Heart left ventricle (tissue), 16 donors: ENCODE measurements at regions of chr1 and their contacts with region 1.

Region 1: DNA sequence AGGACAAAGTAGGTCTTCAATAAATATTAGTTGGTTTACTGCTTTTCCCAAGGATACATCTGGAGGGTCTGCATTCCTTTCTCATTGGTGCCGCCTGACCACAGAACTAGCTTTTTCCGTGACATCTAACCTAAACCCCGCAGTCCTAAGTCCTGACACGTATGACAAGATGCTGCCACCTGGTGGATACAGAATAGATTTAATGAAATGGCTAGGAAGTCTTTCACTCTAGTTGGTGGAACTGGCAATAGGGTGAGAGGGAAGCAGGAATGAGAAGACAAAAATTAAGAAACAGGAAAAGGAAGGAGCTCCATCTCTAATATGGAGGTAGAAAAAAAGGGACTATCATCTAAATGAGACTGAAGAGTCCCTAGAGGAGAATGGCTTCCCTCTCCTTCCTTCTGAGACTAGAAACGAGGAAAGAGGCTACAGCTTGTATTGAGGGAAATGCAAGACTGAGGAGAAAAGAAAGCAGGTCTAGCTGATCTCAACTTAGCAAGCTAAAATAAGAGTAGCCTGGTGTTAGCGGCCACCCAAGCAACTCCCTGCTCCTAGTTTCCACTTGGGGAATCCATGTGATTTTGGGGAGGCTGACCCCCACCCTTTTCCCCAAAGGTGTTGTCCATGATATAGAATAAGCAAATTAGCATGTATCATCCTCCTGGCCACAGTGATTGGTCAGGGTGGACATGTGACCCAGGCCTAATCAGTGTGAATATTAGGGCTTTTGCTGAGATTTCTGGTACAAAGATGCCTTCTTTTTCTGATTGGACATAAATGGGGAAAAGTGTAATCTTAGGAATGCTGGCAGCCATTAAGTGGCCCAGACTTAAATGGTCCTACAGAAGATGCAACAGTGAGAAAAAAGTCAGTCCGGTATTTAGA is 5.9 kb downstream of the RFX5 start:
- DNase-seq: peak in 3 of 5 donors; percentile 33 to 61 (median 43)
- ATAC-seq: peak; percentile 85 to 91 (median 88)
- H3K4me3 ChIP-seq: no peak overlapping the region
- H3K27ac ChIP-seq: peak overlapping the region in 2 of 12 donors; percentile 30 to 54
- H3K4me1 ChIP-seq: peaks cover 0 to 24% (median 7%) of the 10 kb centered on the region in 12 donors
- H3K27me3 ChIP-seq: no peaks in the 10 kb centered on the region
- CTCF ChIP-seq: peak; percentile 61 to 81 (median 73)
- POLR2A ChIP-seq: no peak

Region 2: GRCh38 chr1:151146412-151147140 is 194.5 kb before region 1 on chr1 and contains the start of gene SEMA6C:
- intact Hi-C with region 1: no loop called
- DNase-seq: peak; percentile 97 to 98 (median 98)
- ATAC-seq: peak; percentile 93 to 95 (median 93)
- H3K4me3 ChIP-seq: peak within 1 kb of the TSS; percentile 66 to 97 (median 84)
- H3K27ac ChIP-seq: peak within 1 kb of the TSS; percentile 79 to 92 (median 87)
- H3K4me1 ChIP-seq: peaks cover 13 to 53% (median 39%) of the 10 kb centered on the region in 12 donors
- H3K27me3 ChIP-seq: peaks cover 0 to 5% (median 0%) of the 10 kb centered on the region in 9 donors
- CTCF ChIP-seq: no peak
- POLR2A ChIP-seq: peak; percentile 94 to 97
- total RNA-seq, gene SEMA6C: 36.4 to 97.1 (median 50.8) TPM

Region 3: DNA sequence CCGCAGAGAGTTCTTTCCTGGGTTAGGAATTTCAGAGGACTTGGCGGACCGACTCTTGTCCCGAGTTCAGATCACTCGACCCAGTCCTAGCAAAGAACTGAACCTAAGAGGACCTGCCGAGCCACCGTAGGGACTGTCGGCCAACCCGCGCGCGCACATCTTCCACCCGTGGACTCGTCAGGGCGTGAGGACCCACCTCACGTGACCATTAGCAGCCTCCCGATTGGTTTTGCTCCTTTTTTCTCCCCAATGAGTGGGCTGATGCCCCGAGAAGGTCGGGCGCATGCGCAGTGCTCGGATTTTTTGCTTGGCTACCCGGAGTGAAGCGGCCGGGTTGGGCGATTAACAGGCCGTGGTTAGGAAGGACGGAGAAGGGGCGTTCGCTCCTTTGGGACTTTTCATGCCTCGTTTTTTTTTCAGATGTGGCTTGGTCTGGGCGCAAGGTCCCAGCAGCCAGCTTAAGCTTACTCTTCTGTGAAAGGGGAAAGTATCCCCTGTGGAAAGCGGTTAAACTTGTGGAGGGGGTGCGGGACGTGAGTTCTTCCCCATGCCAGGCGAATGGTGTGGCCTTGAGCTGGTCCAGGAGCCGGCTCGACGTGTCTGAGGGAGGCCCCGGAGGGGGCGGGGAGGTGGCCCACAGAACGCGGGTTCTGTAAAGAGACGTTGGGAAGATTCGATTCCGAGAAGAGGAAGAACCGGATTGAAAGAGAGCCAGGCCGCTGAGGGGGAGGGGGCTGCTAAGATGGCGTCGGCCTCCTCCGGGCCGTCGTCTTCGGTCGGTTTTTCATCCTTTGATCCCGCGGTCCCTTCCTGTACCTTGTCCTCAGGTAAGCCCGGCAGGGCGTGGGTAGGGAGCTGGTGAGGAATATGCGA is 142.6 kb before region 1 on chr1 and contains the start of gene PIP5K1A:
- intact Hi-C with region 1: loop called in 7 of 10 experiments (anchors 2 to 10 kb)
- DNase-seq: peak; percentile 99 to 100 (median 99)
- ATAC-seq: peak; percentile 94 to 97 (median 96)
- H3K4me3 ChIP-seq: peak within 1 kb of the TSS; percentile 58 to 90 (median 78)
- H3K27ac ChIP-seq: peak within 1 kb of the TSS; percentile 33 to 94 (median 90)
- H3K4me1 ChIP-seq: peaks cover 0 to 49% (median 36%) of the 10 kb centered on the region in 12 donors
- H3K27me3 ChIP-seq: no peaks in the 10 kb centered on the region
- CTCF ChIP-seq: no peak
- POLR2A ChIP-seq: peak in 1 of 2 donors; percentile 68
- total RNA-seq, gene PIP5K1A: 28.1 to 48.8 (median 37.0) TPM

Region 4: GRCh38 chr1:151273925-151274466 is 67.1 kb before region 1 on chr1:
- intact Hi-C with region 1: no loop called
- DNase-seq: no peak
- ATAC-seq: no peak
- H3K4me3 ChIP-seq: no peak overlapping the region
- H3K27ac ChIP-seq: no peak overlapping the region
- H3K4me1 ChIP-seq: peaks cover 0 to 29% (median 4%) of the 10 kb centered on the region in 12 donors
- H3K27me3 ChIP-seq: no peaks in the 10 kb centered on the region
- CTCF ChIP-seq: no peak
- POLR2A ChIP-seq: no peak